ENCODE measurements at regions of chr11 and their contacts with region 1.

Region 1: DNA sequence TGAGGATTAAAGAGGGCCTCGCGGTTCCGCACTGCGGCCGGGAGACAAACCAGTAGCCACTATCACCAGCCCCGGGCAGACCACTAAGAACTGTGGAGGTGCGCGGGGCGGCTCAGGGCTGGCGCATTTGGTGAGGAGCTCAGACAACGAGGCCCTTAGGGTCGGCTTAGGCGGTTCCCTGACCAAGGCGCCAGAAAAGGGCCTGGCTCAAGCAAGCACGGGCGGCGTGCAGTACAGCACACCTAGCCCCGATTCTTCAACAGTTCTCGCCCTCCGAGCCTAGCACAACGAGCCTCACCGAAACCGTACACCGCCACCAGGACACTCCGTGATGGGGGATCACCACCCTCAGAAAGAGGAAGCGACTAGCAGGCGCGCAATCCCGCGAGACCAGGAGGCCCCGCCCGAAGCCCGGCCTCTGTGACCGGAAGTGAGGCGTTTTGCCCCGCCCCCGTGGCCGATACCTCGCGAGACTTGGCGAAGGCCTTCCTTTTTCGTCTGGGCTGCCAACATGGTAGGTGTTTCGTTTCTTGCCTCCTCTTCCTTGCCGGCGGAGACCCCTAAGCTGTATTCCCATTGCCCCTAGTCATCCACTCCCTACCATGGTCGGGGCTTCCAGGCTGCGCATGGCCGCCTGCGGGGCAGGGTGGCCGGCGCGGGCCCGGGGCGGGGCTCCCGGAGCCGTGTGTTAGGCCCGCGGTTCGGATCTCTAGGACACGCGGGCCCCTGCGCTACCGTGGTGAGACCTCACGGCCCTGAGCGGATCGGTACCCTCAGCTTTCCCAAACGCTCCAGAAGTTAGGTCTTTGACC is at the starts of genes RPL27A and TRIM66:
- DNase-seq: peak; percentile 91

Region 2: GRCh38 chr11:8477680-8478079 is 204.8 kb before region 1 on chr11:
- CTCF ChIA-PET with region 1: no interaction called
- POLR2A ChIA-PET with region 1: no interaction called
- DNase-seq: no peak

Region 3: GRCh38 chr11:8593935-8594909 is 88.3 kb before region 1 on chr11 and contains the start of gene STK33:
- CTCF ChIA-PET with region 1: no interaction called
- POLR2A ChIA-PET with region 1: interaction called, 10 read pairs
- DNase-seq: peak; percentile 78

Region 4: GRCh38 chr11:8613036-8613435 is 69.5 kb before region 1 on chr11:
- CTCF ChIA-PET with region 1: no interaction called
- POLR2A ChIA-PET with region 1: interaction called, 10 read pairs
- DNase-seq: no peak

Region 5: GRCh38 chr11:8658321-8659057 is 24.0 kb before region 1 on chr11:
- CTCF ChIA-PET with region 1: no interaction called
- POLR2A ChIA-PET with region 1: interaction called, 23 read pairs
- DNase-seq: no peak

Region 6: DNA sequence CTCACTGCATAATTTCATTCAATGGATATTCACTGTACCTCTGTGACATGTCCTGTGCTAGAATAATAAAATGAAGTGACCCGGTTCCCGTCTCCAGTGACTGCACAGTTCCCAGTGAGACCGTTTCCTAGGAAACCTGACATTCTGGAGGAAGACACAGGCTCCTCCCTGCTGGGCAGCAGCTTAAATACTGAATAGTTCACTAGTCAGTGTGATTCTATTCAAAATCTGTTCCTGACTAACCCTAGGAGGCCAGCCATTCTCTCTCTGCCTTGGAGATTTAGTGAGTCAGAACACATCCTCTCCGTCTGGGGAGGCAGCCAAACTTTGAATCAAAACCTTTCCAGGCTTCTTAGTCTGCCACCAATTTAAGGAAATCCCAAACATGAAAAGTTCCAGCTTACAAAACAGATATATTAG is 11.3 kb before region 1 on chr11:
- CTCF ChIA-PET with region 1: no interaction called
- POLR2A ChIA-PET with region 1: interaction called, 36 read pairs
- DNase-seq: no peak

Region 7: DNA sequence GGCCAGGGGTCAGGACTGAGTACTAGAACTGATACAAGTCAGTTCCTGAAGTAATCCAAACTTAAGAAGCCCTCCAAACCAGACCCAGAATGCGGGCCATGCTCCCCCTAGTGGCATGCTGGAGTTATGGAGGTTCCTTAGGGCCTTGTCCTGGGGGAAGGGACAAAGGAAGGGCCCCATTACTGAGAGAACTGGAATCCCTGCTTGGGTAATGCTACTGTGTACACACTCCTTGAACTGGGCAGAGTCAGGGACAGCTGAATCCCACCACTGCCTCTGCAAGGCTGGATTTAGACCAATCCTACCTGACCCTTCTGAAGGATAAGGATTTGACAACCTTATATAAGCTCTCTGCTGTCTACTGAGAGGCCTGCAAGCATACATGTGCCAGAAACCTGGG is 131.1 kb after region 1 on chr11:
- CTCF ChIA-PET with region 1: no interaction called
- POLR2A ChIA-PET with region 1: interaction called, 10 read pairs
- DNase-seq: peak; percentile 83

Region 8: DNA sequence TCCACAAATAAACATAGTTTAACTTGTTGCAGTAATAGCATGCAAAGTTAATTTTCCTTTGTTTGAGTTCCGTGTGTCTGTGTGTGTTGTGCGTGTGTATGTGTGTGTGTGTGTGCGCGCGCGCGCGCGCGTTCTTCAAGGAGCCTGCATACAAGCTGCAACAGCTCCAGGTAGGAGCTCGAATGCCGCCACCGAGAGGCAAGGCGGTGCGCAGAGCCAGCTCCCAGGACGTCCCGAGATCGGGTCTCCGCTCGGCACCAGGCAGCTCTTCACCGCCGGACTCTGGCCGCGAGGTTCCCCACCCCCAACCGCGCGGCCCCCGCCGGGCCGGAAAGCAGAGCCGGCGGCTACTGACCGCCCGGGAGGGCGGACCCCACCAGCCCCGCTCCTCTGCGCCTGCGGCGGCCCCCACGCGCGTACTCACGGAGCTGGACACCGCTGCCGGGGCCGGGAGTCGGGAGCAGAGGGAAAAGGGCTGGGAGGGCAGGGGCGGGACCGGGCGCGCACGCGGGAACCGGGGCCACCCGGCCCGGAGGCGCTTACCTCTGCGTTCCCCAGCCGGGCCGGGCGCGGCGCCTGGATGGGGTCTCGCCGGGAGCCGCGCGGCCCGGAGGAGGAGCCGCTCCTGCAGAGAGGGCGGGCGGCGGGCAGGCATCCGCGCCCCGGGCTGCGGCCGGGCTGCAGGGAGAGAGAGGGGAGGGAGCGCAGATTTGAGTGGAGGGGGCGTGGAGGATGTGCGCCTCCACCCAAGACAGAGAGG is 188.1 kb after region 1 on chr11:
- CTCF ChIA-PET with region 1: no interaction called
- POLR2A ChIA-PET with region 1: interaction called, 15 read pairs
- DNase-seq: peak; percentile 71